PC-3 (cell line): ENCODE measurements at regions of chr5 and their contacts with region 1.

Region 1: GRCh38 chr5:159331093-159331973 is 1.0 kb upstream of the IL12B start:
- DNase-seq: peak; percentile 58
- ATAC-seq: peak; percentile 87
- H3K4me3 ChIP-seq: peak overlapping the region; percentile 72
- H3K27ac ChIP-seq: 0 out of 2 replicates have a peak overlapping the region, but pooled peaks have one; percentile 19
- H3K4me1 ChIP-seq: peaks cover 3% of the 10 kb centered on the region; the same call in 1 of the 2 replicates
- H3K27me3 ChIP-seq: no peaks in the 10 kb centered on the region
- CTCF ChIP-seq: peak; percentile 65

Region 2: DNA sequence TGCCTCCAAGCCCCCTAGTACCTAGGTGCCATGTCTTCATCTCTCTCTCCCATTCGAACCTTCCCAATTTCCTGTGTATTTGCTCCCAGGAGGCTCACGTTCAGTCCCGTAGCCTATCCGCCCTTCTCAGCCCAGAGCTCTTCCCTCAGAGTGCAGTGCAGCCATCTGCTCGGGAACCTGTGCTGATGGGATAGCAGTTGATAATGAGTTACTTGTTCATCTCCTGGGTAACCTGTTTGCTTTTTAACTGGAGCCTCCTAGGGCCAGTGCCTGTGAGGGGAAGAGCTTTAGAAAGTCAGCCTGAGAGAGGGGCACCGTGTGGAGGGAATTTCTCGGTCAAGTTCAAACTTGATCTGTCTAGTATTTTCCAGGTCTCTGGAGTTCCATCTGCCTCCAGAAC is 228.8 kb after region 1 on chr5:
- CTCF ChIA-PET with region 1: no interaction called
- POLR2A ChIA-PET with region 1: no interaction called
- intact Hi-C with region 1: no loop called
- DNase-seq: no peak
- ATAC-seq: no peak
- H3K4me3 ChIP-seq: no peak overlapping the region
- H3K27ac ChIP-seq: no peak overlapping the region
- H3K4me1 ChIP-seq: no peaks in the 10 kb centered on the region
- H3K27me3 ChIP-seq: no peaks in the 10 kb centered on the region
- CTCF ChIP-seq: no peak

Region 3: GRCh38 chr5:159581502-159582249 is 250.3 kb after region 1 on chr5:
- CTCF ChIA-PET with region 1: no interaction called
- POLR2A ChIA-PET with region 1: no interaction called
- intact Hi-C with region 1: no loop called
- DNase-seq: peak; percentile 95
- ATAC-seq: peak; percentile 73
- H3K4me3 ChIP-seq: no peak overlapping the region
- H3K27ac ChIP-seq: peak overlapping the region; percentile 80
- H3K4me1 ChIP-seq: peaks cover 31% of the 10 kb centered on the region
- H3K27me3 ChIP-seq: no peaks in the 10 kb centered on the region
- CTCF ChIP-seq: peak; percentile 26; the same call in 1 of the 2 replicates

Region 4: DNA sequence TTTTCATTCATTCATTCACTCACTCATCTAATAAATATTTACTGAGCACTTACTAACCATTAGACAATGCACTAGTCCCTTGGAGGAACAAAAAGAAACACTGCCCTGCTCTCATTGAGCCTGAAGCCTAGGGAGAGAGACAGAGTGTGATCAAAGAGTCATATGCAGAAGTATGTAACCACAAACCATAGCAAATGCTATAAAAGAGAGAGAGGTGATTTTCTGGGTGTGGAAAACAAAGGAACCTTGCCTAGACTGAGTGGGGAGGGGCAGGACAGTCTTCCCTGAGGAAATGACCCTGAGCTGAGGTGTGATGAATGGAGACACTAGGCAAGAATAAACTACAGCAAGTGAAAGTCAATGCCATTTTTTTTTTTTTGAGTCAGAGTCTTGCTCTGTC is 574.2 kb after region 1 on chr5:
- CTCF ChIA-PET with region 1: no interaction called
- POLR2A ChIA-PET with region 1: no interaction called
- intact Hi-C with region 1: loop called (anchors 10 kb)
- DNase-seq: peak; percentile 98
- ATAC-seq: peak; percentile 93
- H3K4me3 ChIP-seq: no peak overlapping the region
- H3K27ac ChIP-seq: peak overlapping the region; percentile 87
- H3K4me1 ChIP-seq: peaks cover 63% of the 10 kb centered on the region
- H3K27me3 ChIP-seq: no peaks in the 10 kb centered on the region
- CTCF ChIP-seq: no peak